Right cardiac atrium (tissue), 5 donors: ENCODE measurements at regions of chr5 and their contacts with region 1.

Region 1: GRCh38 chr5:3602785-3603502 is 7.3 kb downstream of the IRX1 start:
- DNase-seq: peak in 2 of 3 donors; percentile 33 to 67
- ATAC-seq: peak; percentile 43 to 75
- H3K4me3 ChIP-seq: no peak overlapping the region
- H3K27ac ChIP-seq: no peak overlapping the region
- H3K4me1 ChIP-seq: no peaks in the 10 kb centered on the region
- H3K27me3 ChIP-seq: no peaks in the 10 kb centered on the region

Region 2: GRCh38 chr5:2207952-2208544 is 1394.9 kb before region 1 on chr5:
- intact Hi-C with region 1: loop called in 1 of 4 experiments (anchors 10 kb)
- DNase-seq: no peak
- ATAC-seq: peak in 1 of 2 donors; percentile 24
- H3K4me3 ChIP-seq: no peak overlapping the region
- H3K27ac ChIP-seq: no peak overlapping the region
- H3K4me1 ChIP-seq: no peaks in the 10 kb centered on the region
- H3K27me3 ChIP-seq: no peaks in the 10 kb centered on the region